Heart right ventricle (tissue), 16 donors: ENCODE measurements at regions of chr9 and their contacts with region 1.

Region 1: GRCh38 chr9:114653556-114654159 is 3.9 kb downstream of the TEX53 start:
- DNase-seq: peak in 1 of 2 donors; percentile 75
- ATAC-seq: peak in 7 of 8 donors; percentile 28 to 81 (median 68)
- H3K4me3 ChIP-seq: no peak overlapping the region
- H3K27ac ChIP-seq: no peak overlapping the region
- H3K4me1 ChIP-seq: peaks cover 0 to 8% (median 0%) of the 10 kb centered on the region in 9 donors
- H3K27me3 ChIP-seq: no peaks in the 10 kb centered on the region
- CTCF ChIP-seq: peak; percentile 66 to 92 (median 83)

Region 2: GRCh38 chr9:114339130-114339908 is 314.3 kb before region 1 on chr9:
- intact Hi-C with region 1: loop called in 1 of 10 experiments (anchors 5 kb)
- DNase-seq: peak in 1 of 2 donors; percentile 48
- ATAC-seq: peak in 5 of 8 donors; percentile 34 to 80 (median 48)
- H3K4me3 ChIP-seq: no peak overlapping the region
- H3K27ac ChIP-seq: no peak overlapping the region
- H3K4me1 ChIP-seq: peaks cover 0 to 9% (median 0%) of the 10 kb centered on the region in 9 donors
- H3K27me3 ChIP-seq: no peaks in the 10 kb centered on the region
- CTCF ChIP-seq: peak; percentile 42 to 87 (median 71)

Region 3: DNA sequence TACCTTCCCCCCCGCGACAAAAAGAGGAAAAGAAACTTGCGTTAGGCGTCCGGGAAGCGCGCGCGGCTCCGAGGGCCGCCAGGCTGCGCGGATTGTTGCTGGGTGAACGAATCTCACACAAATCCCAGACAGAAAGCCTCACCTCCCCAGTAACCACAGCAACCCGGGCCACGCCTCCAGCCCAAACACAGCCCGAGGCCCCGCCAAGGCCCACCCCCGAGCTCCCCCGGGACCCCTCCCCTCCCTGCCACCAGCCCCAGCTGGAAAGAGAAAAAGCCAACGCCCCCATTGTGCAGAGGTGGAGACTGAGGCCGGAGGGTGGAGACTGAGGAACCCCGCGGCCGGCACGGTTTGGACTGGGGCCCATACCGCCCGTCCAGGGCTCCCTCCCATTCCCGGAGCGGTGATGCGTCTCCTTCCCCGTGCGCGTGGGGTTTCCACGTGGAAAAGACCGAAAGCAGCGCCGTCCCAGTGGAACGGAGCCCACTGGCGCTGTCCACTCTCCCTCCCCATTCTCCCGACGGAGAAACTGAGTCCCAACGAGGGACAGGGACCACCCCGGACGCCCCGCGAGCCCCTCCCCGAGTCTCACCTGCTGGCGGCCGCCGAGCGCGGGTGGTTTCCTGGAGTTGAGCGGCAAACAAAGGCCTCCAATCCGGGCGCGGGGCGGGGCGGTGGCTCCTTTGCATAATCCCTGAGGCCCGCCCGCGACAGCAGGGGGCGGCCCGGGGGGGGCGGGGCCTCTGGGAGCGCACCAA is 255.6 kb before region 1 on chr9:
- intact Hi-C with region 1: loop called in 3 of 10 experiments (anchors 5 to 10 kb)
- DNase-seq: peak; percentile 96
- ATAC-seq: peak; percentile 94 to 97 (median 96)
- H3K4me3 ChIP-seq: peak overlapping the region; percentile 48 to 91 (median 78)
- H3K27ac ChIP-seq: peak overlapping the region; percentile 36 to 90 (median 79)
- H3K4me1 ChIP-seq: peaks cover 3 to 46% (median 25%) of the 10 kb centered on the region in 9 donors
- H3K27me3 ChIP-seq: no peaks in the 10 kb centered on the region
- CTCF ChIP-seq: peak in 3 of 9 donors; percentile 17 to 36 (median 17)

Region 4: GRCh38 chr9:114405294-114406034 is 248.2 kb before region 1 on chr9:
- intact Hi-C with region 1: loop called (anchors 1 to 10 kb)
- DNase-seq: peak; percentile 52 to 84
- ATAC-seq: peak; percentile 87 to 95 (median 91)
- H3K4me3 ChIP-seq: no peak overlapping the region
- H3K27ac ChIP-seq: no peak overlapping the region
- H3K4me1 ChIP-seq: peaks cover 0 to 6% (median 0%) of the 10 kb centered on the region in 9 donors
- H3K27me3 ChIP-seq: peaks cover 0 to 3% (median 0%) of the 10 kb centered on the region in 7 donors
- CTCF ChIP-seq: peak; percentile 47 to 93 (median 85)

Region 5: DNA sequence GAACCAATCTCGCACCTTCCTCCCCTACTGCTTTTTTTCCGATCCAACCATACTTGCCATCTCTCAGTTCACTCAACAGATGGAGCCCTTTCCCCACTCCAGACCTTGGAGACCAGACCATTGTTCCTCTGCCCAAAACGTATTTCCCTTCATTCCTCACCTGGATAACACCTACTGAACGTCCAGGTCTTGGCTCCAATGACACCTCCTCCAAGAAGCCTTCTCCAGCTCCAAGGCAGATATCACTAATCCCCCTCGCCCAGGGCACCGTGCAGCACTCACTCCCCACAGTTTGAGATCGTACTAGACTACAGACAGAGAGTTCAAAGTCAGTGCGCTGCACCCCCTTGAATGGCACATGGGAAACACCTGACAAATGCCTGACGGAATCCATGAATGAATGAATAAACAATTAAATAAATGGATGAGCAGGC is 218.8 kb before region 1 on chr9:
- intact Hi-C with region 1: loop called in 5 of 10 experiments (anchors 10 kb)
- DNase-seq: no peak
- ATAC-seq: peak in 3 of 8 donors; percentile 31 to 41 (median 39)
- H3K4me3 ChIP-seq: no peak overlapping the region
- H3K27ac ChIP-seq: no peak overlapping the region
- H3K4me1 ChIP-seq: no peaks in the 10 kb centered on the region
- H3K27me3 ChIP-seq: peaks cover 0 to 41% (median 8%) of the 10 kb centered on the region in 7 donors
- CTCF ChIP-seq: peak in 7 of 9 donors; percentile 36 to 59 (median 46)

Region 6: DNA sequence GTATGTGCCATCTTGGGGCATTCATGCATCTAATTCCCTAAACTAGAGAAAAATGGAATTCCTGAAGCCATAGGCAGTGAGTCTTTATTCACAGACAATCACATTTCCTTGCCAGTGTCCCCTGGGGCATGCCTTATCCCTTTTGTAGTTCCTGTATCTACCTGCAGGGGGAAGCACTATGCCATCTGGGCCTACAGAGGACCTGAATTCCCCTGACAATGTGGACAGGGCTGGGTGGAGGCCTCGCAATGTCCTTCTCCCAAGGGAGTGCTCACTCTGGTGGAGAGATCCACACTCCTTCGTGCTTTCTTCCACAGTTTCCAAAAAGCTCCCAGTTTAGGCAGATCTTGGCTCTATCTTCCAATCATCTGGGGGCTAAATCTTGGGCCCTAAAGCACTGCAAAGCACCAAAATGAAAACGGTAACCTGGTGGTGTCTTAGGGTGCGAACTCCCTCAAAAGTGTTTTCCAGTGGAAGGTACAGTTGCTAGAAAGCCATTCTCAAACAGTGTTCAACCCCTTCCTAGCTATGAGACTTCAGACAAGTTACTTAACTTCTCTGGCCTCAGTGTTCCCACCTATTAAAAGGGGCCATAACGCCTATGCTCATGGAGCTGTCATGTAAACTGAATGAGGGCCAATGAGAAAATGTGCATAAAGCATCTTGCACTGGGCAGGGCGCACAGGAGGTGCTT is 165.9 kb before region 1 on chr9:
- intact Hi-C with region 1: loop called in 7 of 10 experiments (anchors 2 to 5 kb)
- DNase-seq: peak in 1 of 2 donors; percentile 62
- ATAC-seq: peak in 6 of 8 donors; percentile 70 to 92 (median 80)
- H3K4me3 ChIP-seq: no peak overlapping the region
- H3K27ac ChIP-seq: no peak overlapping the region
- H3K4me1 ChIP-seq: peaks cover 0 to 8% (median 0%) of the 10 kb centered on the region in 9 donors
- H3K27me3 ChIP-seq: peaks cover 0 to 33% (median 3%) of the 10 kb centered on the region in 7 donors
- CTCF ChIP-seq: peak; percentile 30 to 87 (median 69)

Region 7: DNA sequence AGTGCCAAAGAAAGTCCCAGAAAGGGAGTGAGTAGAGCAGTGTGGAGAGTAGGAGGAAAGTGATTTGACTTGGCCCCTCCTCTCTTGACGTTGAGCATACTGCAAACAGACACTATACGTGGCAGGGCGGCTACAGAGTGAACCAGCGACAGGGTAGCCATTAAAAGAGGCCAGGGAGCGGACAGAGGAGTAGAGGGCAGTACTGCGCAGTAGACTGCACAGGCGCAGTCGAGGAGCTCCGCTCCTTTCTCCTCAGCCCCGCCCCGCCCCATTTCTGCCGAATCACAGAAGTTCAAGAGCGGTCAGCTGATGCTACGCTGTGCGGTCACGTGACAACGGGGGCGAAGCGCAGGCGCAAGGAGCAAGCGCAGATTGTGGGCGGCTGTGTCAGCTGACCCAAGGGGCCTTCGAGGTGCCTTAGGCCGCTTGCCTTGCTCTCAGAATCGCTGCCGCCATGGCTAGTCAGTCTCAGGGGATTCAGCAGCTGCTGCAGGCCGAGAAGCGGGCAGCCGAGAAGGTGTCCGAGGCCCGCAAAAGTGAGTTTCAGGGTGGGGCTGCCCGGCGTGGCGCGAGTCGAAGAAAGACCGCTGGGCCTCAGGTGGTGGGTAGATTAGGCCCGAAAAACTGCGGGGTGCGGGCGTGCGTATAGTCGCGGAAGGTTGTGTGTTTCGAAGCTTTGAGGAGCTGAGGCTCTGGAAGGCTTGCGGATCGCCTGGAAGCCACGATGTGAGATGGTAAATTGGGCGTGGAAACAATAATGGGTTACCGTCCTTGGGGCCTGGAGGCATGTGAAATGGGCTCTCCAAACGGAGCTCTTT is 66.1 kb before region 1 on chr9 and contains the start of gene ATP6V1G1:
- intact Hi-C with region 1: loop called in 1 of 10 experiments (anchors 5 kb)
- DNase-seq: peak; percentile 99 to 100
- ATAC-seq: peak; percentile 99 to 100 (median 99)
- H3K4me3 ChIP-seq: peak within 1 kb of the TSS; percentile 63 to 100 (median 78)
- H3K27ac ChIP-seq: peak within 1 kb of the TSS; percentile 49 to 96 (median 84)
- H3K4me1 ChIP-seq: peaks cover 11 to 47% (median 42%) of the 10 kb centered on the region in 9 donors
- H3K27me3 ChIP-seq: no peaks in the 10 kb centered on the region
- CTCF ChIP-seq: peak in 3 of 9 donors; percentile 43 to 50 (median 49)
- total RNA-seq, gene ATP6V1G1: 53.1 to 80.3 (median 64.5) TPM